CD8-positive, alpha-beta T cell (primary cell): ENCODE measurements at regions of chr7 and their contacts with region 1.

Region 1: DNA sequence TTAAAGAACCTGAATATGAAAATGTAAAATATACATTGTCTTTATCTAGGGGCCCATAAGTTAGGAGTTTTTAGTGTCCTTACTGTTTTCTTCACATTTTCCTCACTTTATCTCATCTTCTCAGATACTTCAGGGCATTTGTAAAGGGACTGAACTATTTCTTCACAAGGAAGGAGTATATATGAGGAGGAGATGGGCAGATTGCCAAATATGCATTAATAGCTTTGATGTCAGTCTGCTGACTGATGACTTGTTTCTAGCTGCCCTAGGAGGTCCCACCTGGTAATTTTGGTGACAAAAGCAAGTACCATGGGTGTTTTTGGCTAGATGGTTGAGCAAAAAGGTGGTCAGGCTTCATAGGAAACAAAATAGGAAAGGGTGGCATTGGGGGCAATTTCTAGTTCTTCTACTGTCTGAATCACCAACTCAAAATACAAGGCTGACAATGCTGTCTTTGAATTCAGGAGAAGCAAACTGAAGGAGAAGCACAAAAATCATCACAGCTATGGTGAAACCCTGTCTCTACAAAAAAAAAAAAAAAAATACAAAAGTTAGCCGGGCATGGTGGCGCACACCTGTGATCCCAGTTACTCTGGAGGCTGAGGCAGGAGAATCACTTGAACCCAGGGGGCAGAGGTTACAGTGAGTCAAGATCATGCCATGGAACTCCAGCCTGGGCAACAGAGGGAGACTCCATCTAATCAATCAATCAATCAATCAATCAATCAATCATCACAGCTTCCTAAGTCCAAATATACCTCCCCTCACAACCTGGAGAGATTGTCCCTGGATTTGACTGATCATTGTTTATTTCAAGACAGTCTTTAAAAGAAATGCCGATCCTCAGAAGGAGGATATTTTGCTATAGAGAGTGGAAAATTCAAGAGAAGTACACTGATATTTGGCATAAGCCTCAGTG is 10.3 kb upstream of the STRIP2 start:
- DNase-seq: no peak
- ATAC-seq: no peak
- H3K4me3 ChIP-seq: no peak overlapping the region
- H3K4me3 Mint-ChIP-seq: no peak overlapping the region
- H3K27ac ChIP-seq: no peak overlapping the region
- H3K27ac Mint-ChIP-seq: no peak overlapping the region
- H3K4me1 ChIP-seq: no peaks in the 10 kb centered on the region
- H3K4me1 Mint-ChIP-seq: peaks cover 2% of the 10 kb centered on the region
- H3K27me3 ChIP-seq: no peaks in the 10 kb centered on the region
- H3K27me3 Mint-ChIP-seq: no peaks in the 10 kb centered on the region
- CTCF ChIP-seq: no peak

Region 2: GRCh38 chr7:128335734-128336133 is 1088.2 kb before region 1 on chr7:
- CTCF ChIA-PET with region 1: no interaction called
- POLR2A ChIA-PET with region 1: no interaction called
- intact Hi-C with region 1: loop called in 1 of 2 experiments (anchors 10 kb)
- DNase-seq: no peak
- ATAC-seq: no peak
- H3K4me3 ChIP-seq: no peak overlapping the region
- H3K4me3 Mint-ChIP-seq: no peak overlapping the region
- H3K27ac ChIP-seq: no peak overlapping the region
- H3K27ac Mint-ChIP-seq: no peak overlapping the region
- H3K4me1 ChIP-seq: no peaks in the 10 kb centered on the region
- H3K4me1 Mint-ChIP-seq: peaks cover 11% of the 10 kb centered on the region
- H3K27me3 ChIP-seq: no peaks in the 10 kb centered on the region
- H3K27me3 Mint-ChIP-seq: no peaks in the 10 kb centered on the region
- CTCF ChIP-seq: no peak

Region 3: GRCh38 chr7:129489491-129489890 is 65.5 kb after region 1 on chr7:
- CTCF ChIA-PET with region 1: no interaction called
- POLR2A ChIA-PET with region 1: no interaction called
- intact Hi-C with region 1: no loop called
- DNase-seq: no peak
- ATAC-seq: no peak
- H3K4me3 ChIP-seq: no peak overlapping the region
- H3K4me3 Mint-ChIP-seq: no peak overlapping the region
- H3K27ac ChIP-seq: no peak overlapping the region
- H3K27ac Mint-ChIP-seq: no peak overlapping the region
- H3K4me1 ChIP-seq: no peaks in the 10 kb centered on the region
- H3K4me1 Mint-ChIP-seq: peaks cover 2% of the 10 kb centered on the region
- H3K27me3 ChIP-seq: no peaks in the 10 kb centered on the region
- H3K27me3 Mint-ChIP-seq: no peaks in the 10 kb centered on the region
- CTCF ChIP-seq: no peak

Region 4: DNA sequence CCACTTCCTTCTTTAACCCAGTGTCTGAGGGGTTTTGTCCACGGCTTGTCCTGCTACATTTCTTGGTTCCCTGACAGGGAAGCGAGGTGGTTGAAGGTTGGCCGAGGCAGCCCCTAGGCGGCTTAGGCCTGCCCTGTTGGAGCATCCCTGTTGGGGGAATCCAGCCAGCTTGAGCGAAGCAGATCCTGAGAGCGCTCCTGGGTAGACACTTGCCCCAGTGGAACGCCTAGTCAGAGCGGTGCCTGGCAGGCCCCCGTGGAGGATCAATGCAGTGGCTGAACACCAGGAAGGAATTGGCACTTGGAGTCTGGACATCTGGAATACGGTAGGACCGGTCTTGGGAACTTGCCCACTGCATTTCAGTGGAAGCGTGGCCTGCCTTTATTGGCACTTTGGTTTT is 154.9 kb after region 1 on chr7:
- CTCF ChIA-PET with region 1: no interaction called
- POLR2A ChIA-PET with region 1: no interaction called
- intact Hi-C with region 1: loop called in 1 of 2 experiments (anchors 2 kb)
- DNase-seq: no peak
- ATAC-seq: no peak
- H3K4me3 ChIP-seq: no peak overlapping the region
- H3K4me3 Mint-ChIP-seq: no peak overlapping the region
- H3K27ac ChIP-seq: no peak overlapping the region
- H3K27ac Mint-ChIP-seq: no peak overlapping the region
- H3K4me1 ChIP-seq: no peaks in the 10 kb centered on the region
- H3K4me1 Mint-ChIP-seq: no peaks in the 10 kb centered on the region
- H3K27me3 ChIP-seq: no peaks in the 10 kb centered on the region
- H3K27me3 Mint-ChIP-seq: no peaks in the 10 kb centered on the region
- CTCF ChIP-seq: no peak